ENCODE measurements at regions of chr12 and their contacts with region 1.

Region 1: DNA sequence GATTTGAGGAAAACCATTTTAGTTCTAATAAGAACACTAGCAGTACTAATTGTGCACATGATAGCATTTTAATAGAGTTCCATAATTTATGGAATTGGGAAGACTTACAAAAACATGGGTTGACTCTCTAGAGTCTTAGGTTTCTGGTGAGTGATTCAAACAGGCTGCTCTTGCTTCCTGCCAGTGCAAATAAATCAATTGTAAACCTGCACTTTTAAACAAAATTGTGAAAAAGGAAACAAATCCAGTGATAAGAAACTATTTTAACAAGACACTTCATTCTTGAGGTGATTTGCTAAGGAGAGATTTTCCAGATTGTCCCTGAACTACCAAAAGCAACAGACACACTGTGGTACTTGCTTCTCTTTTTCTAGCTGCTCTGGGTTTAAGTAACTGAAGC is 112.2 kb downstream of the CACNA1C start:
- DNase-seq: no peak
- H3K4me3 ChIP-seq: no peak overlapping the region
- H3K27ac ChIP-seq: no peak overlapping the region
- H3K27me3 ChIP-seq: no peaks in the 10 kb centered on the region
- CTCF ChIP-seq: no peak

Region 2: DNA sequence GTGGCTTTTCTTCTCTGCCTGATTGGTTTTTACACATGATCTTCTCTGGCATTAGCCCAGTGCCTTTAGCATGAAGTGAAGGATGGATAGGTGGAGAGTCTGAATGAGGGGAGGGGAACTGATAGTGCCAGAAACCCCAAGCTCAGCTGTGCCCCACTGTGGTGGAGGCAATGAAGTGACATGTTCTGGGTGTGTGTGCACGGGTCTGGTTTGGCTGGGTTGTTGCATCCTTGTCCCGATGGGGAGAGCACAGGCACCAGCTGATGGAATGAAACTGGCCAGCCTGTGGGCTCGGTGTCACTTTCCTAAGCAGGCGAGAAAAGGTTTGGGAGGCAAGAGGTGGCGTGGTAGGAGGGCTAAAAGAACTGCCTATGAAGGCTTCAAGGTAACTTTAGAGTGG is 47.0 kb before region 1 on chr12:
- intact Hi-C with region 1: loop called in 1 of 2 experiments (anchors 2 kb)
- DNase-seq: no peak
- H3K4me3 ChIP-seq: no peak overlapping the region
- H3K27ac ChIP-seq: no peak overlapping the region
- H3K27me3 ChIP-seq: no peaks in the 10 kb centered on the region
- CTCF ChIP-seq: no peak

Region 3: GRCh38 chr12:2284857-2285256 is 119.8 kb after region 1 on chr12:
- intact Hi-C with region 1: no loop called
- DNase-seq: peak in 8 of 10 donors; percentile 41 to 74 (median 62)
- H3K4me3 ChIP-seq: no peak overlapping the region
- H3K27ac ChIP-seq: peak overlapping the region in 3 of 59 donors; percentile 8 to 28 (median 22)
- H3K27me3 ChIP-seq: no peaks in the 10 kb centered on the region
- CTCF ChIP-seq: peak in 54 of 56 donors; percentile 35 to 72 (median 62)

Measured in dorsolateral prefrontal cortex (tissue), 120 donors.